Heart right ventricle (tissue), 16 donors: ENCODE measurements at regions of chr4 and their contacts with region 1.

Region 1: DNA sequence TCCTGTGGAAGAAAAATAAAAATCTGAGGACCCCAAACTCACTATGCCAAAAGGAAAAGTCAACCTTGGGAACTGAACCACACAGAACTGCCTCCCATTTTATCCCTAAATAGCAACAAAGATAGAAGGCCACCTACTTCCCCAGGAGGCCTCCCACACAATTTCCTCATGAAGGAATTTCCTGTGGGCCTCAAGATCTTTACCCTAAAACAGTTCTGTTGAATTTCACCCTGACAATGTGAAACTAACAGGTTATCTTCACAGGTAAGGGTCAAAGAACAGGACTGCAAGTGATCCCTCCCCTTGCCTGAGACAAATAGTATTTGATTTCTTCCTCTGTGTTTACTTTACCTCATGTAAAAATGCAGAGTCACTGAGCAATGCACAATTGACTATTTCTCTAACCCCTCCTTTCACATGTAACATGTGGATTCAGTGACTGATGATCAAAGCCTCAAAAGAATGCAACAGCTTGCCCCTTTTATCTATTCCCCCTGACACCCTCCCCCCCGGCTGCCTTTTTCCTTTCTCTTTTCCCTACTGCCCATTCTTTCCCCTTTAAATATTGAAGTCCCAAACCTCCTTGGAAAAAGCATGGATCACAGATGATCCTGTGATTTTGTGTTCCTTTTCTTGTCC is 33.3 kb downstream of the MEPE start:
- DNase-seq: no peak
- ATAC-seq: no peak
- H3K4me3 ChIP-seq: no peak overlapping the region
- H3K27ac ChIP-seq: peak overlapping the region in 4 of 10 donors; percentile 3 to 60 (median 25)
- H3K4me1 ChIP-seq: peaks cover 0 to 20% (median 10%) of the 10 kb centered on the region in 9 donors
- H3K27me3 ChIP-seq: no peaks in the 10 kb centered on the region
- CTCF ChIP-seq: no peak

Region 2: GRCh38 chr4:87949961-87950360 is 83.9 kb after region 1 on chr4:
- intact Hi-C with region 1: loop called in 1 of 10 experiments (anchors 10 kb)
- DNase-seq: no peak
- ATAC-seq: peak in 6 of 8 donors; percentile 27 to 65 (median 47)
- H3K4me3 ChIP-seq: no peak overlapping the region
- H3K27ac ChIP-seq: no peak overlapping the region
- H3K4me1 ChIP-seq: peaks cover 0 to 22% (median 9%) of the 10 kb centered on the region in 9 donors
- H3K27me3 ChIP-seq: no peaks in the 10 kb centered on the region
- CTCF ChIP-seq: no peak

Region 3: GRCh38 chr4:87967193-87967592 is 101.1 kb after region 1 on chr4:
- intact Hi-C with region 1: loop called in 1 of 10 experiments (anchors 2 kb)
- DNase-seq: no peak
- ATAC-seq: no peak
- H3K4me3 ChIP-seq: no peak overlapping the region
- H3K27ac ChIP-seq: no peak overlapping the region
- H3K4me1 ChIP-seq: no peaks in the 10 kb centered on the region
- H3K27me3 ChIP-seq: no peaks in the 10 kb centered on the region
- CTCF ChIP-seq: no peak

Region 4: DNA sequence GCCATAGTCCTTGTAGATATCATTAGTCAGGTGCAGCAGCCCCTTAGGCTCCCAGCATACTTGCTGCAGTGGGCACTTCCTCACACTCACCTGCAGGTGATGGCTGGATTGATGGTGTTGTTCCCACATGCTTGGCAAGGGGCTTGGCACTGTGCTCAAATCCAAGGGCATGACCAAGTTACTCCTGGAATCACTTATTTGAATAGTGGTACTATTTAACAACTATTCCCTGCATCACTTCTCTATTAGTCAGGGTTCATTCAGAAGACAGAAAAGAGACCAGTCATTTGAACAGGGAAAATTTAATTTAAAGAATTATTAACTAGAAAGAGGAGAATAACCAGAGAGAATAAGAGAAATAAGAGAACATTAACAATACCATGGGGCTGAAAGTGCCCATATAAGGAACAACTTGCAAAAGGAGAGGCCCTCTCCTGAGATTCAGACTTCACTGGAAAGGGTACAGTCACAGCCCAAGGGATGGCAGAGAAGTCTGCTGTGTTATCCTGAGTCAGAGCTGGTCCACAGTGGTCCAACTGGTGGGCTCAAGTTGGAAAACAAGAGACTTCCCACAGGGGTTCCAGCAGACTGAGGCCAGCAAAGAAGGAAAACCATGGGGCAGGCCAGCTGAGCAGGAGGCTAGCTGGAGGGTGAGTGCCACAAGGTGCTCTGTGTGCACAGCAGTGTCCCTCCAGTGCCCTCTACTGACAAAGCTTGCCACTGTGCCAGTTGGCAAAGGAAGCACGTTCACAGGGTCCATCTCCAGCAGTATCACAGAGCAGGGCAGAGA is 119.2 kb after region 1 on chr4:
- intact Hi-C with region 1: no loop called
- DNase-seq: peak; percentile 38 to 55
- ATAC-seq: peak; percentile 61 to 98 (median 88)
- H3K4me3 ChIP-seq: no peak overlapping the region
- H3K27ac ChIP-seq: no peak overlapping the region
- H3K4me1 ChIP-seq: no peaks in the 10 kb centered on the region
- H3K27me3 ChIP-seq: peaks cover 0 to 13% (median 0%) of the 10 kb centered on the region in 7 donors
- CTCF ChIP-seq: peak in 7 of 9 donors; percentile 38 to 69 (median 59)